HCT116 (cell line): ENCODE measurements at regions of chr2 and their contacts with region 1.

Region 1: GRCh38 chr2:132909427-132909826 is 239.4 kb upstream of the LYPD1 start:
- DNase-seq: no peak
- ATAC-seq: no peak
- H3K4me3 ChIP-seq: no peak overlapping the region
- H3K27ac ChIP-seq: no peak overlapping the region
- H3K4me1 ChIP-seq: no peaks in the 10 kb centered on the region
- H3K27me3 ChIP-seq: no peaks in the 10 kb centered on the region
- CTCF ChIP-seq: no peak
- POLR2A ChIP-seq: no peak
- RAD21 ChIP-seq: no peak

Region 2: DNA sequence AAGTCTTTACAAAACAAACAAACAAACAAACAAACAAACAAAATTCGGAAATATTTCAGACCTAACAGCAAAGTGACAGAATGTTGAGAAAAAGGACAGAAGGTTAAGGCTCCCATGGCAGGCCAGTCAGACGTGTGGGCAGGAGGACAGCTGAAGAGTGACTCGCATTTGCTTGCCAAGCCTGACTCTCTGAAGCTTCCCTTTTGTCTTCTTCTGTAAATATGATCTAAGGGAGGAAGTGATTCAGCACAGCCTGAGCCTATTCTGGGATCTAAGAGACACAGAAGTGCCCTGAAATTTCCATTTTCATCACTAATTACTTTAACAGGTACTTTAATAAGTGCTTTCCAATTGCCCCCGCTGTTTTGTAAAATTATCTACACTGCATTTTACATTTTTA is 105.4 kb before region 1 on chr2:
- CTCF ChIA-PET with region 1: no interaction called
- POLR2A ChIA-PET with region 1: no interaction called
- RAD21 ChIA-PET with region 1: no interaction called
- intact Hi-C with region 1: loop called (anchors 5 kb)
- DNase-seq: no peak
- ATAC-seq: no peak
- H3K4me3 ChIP-seq: no peak overlapping the region
- H3K27ac ChIP-seq: no peak overlapping the region
- H3K4me1 ChIP-seq: no peaks in the 10 kb centered on the region
- H3K27me3 ChIP-seq: peaks cover 12% of the 10 kb centered on the region; the same call in 1 of the 2 replicates
- CTCF ChIP-seq: no peak
- POLR2A ChIP-seq: no peak
- RAD21 ChIP-seq: no peak

Region 3: GRCh38 chr2:132891498-132891897 is 17.9 kb before region 1 on chr2:
- CTCF ChIA-PET with region 1: no interaction called
- POLR2A ChIA-PET with region 1: no interaction called
- RAD21 ChIA-PET with region 1: no interaction called
- intact Hi-C with region 1: no loop called
- DNase-seq: no peak
- ATAC-seq: no peak
- H3K4me3 ChIP-seq: no peak overlapping the region
- H3K27ac ChIP-seq: no peak overlapping the region
- H3K4me1 ChIP-seq: no peaks in the 10 kb centered on the region
- H3K27me3 ChIP-seq: peaks cover 4% of the 10 kb centered on the region; the same call in 1 of the 2 replicates
- CTCF ChIP-seq: no peak
- POLR2A ChIP-seq: no peak
- RAD21 ChIP-seq: no peak

Region 4: DNA sequence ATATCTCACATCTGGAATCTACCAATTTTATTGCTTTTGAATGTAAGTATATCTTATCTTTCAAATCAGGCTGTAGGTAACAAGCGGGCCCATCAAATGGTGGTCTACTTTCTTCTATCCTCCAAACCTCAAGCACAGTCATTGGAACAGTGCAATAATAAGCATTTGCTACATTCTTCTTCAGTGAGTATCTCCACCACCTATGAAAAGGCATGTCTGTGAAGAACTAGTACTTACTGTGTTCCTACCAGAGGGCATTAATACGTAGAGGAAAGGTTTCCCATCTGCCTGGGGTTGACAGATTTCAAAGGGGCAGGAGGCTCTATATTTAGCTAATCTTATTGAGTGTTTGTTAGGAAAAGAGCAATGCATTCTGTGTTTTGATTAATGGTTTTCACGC is 247.7 kb after region 1 on chr2:
- CTCF ChIA-PET with region 1: no interaction called
- POLR2A ChIA-PET with region 1: no interaction called
- RAD21 ChIA-PET with region 1: no interaction called
- intact Hi-C with region 1: no loop called
- DNase-seq: no peak
- ATAC-seq: no peak
- H3K4me3 ChIP-seq: no peak overlapping the region
- H3K27ac ChIP-seq: no peak overlapping the region
- H3K4me1 ChIP-seq: no peaks in the 10 kb centered on the region
- H3K27me3 ChIP-seq: no peaks in the 10 kb centered on the region
- CTCF ChIP-seq: no peak
- POLR2A ChIP-seq: no peak
- RAD21 ChIP-seq: no peak